Tibial artery (tissue), 4 donors: ENCODE measurements at regions of chr6 and their contacts with region 1.

Region 1: DNA sequence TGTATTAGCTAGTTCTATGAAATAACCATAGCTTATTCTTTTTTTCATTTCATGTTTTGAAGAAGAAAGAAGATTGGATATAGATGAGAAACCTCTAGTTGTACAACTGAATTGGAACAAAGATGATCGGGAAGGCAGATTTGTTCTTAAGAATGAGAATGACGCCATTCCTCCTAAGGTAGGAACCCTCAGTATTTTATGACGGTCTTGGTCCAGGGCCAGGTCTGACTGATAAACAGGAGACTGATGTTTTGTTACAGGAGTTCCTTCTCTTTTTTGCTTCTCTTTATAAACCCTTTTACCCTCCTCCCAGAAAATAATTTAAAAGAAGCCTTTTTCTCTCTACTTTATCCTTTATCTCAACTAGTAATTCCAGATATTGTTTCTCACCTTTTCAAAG is 43.6 kb downstream of the AFDN start:
- DNase-seq: no peak
- H3K4me3 ChIP-seq: no peak overlapping the region
- H3K27ac ChIP-seq: no peak overlapping the region
- H3K4me1 ChIP-seq: no peaks in the 10 kb centered on the region
- H3K27me3 ChIP-seq: no peaks in the 10 kb centered on the region
- CTCF ChIP-seq: no peak

Region 2: GRCh38 chr6:167268683-167269280 is 601.5 kb before region 1 on chr6:
- intact Hi-C with region 1: no loop called
- DNase-seq: no peak
- H3K4me3 ChIP-seq: no peak overlapping the region
- H3K27ac ChIP-seq: no peak overlapping the region
- H3K4me1 ChIP-seq: no peaks in the 10 kb centered on the region
- H3K27me3 ChIP-seq: peaks cover 0 to 13% of the 10 kb centered on the region in 2 donors
- CTCF ChIP-seq: no peak

Region 3: DNA sequence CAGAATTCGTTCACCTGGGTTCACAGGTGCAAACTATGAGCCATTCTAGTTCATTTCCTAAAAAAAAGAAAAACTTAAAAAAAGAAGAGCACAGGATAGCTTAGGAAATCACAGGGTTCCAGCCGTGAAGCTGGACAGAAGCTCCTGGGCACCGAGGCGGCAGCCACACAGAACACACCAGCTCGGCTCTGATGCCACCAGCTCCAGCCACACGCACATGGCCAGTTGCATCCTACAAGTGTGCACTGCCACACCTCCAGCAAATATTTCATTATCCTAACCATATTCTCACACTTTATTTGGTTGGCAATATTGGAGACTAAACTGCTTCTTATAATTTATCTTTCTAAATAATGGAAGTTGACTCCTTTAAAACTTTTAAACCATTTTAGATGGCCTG is 69.8 kb before region 1 on chr6:
- intact Hi-C with region 1: loop called (anchors 2 kb)
- DNase-seq: no peak
- H3K4me3 ChIP-seq: no peak overlapping the region
- H3K27ac ChIP-seq: no peak overlapping the region
- H3K4me1 ChIP-seq: peaks cover 0 to 13% (median 5%) of the 10 kb centered on the region in 4 donors
- H3K27me3 ChIP-seq: peaks cover 0 to 33% of the 10 kb centered on the region in 2 donors
- CTCF ChIP-seq: no peak

Region 4: GRCh38 chr6:167932468-167933276 is 62.4 kb after region 1 on chr6:
- intact Hi-C with region 1: no loop called
- DNase-seq: no peak
- H3K4me3 ChIP-seq: no peak overlapping the region
- H3K27ac ChIP-seq: no peak overlapping the region
- H3K4me1 ChIP-seq: no peaks in the 10 kb centered on the region
- H3K27me3 ChIP-seq: no peaks in the 10 kb centered on the region
- CTCF ChIP-seq: no peak